ENCODE measurements at regions of chr6 and their contacts with region 1.

Region 1: GRCh38 chr6:129672881-129673643 is 36.9 kb downstream of the ARHGAP18 start:
- DNase-seq: no peak
- ATAC-seq: no peak
- H3K4me3 Mint-ChIP-seq: peak overlapping the region; percentile 32
- H3K27ac Mint-ChIP-seq: peak overlapping the region; percentile 85
- H3K4me1 Mint-ChIP-seq: peaks cover 27% of the 10 kb centered on the region
- H3K27me3 Mint-ChIP-seq: no peaks in the 10 kb centered on the region
- CTCF ChIP-seq: no peak

Region 2: DNA sequence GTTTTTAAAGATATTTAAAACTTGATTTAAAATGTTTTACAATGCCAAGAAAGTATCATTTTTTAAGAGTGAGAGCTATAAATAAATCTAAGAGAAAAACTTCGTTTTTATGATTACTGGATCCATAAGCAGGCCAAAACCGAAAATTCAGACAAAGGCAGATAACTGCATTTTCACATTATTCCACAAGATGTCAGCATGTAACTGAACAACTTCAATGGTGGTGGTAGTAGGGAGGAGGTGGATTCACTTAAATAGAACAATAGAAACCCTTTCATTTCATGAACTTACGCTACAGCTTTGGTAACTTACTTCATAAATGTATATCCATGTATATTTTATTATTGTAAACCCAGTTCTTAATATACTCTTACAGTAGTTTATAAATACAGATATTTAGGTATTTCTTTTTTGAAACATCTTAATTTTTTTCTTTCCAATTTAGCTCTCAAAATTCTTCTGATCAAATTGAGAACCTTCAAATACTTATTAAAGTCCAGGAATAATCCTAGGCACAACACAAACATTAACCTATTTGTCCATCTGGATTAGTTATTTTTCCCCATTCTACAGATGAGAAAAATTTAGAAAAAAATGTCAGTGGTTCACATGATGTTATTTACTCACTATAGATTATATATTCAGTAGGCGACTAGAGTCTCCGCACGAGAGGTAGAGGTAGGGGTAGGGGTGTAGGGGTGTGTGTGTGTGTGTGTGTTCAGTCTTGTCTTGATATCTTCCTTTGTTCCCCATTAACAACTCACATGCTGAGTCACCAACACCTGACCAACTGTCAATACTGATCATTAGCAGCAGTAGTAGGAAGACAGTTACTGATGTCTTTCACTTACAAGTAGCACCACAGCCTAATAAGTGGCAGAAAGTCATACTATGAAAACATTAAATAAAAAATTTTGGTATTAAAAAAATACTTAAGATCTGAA is 74.5 kb before region 1 on chr6:
- CTCF ChIA-PET with region 1: interaction called, 6 read pairs
- POLR2A ChIA-PET with region 1: no interaction called
- intact Hi-C with region 1: loop called (anchors 2 kb)
- DNase-seq: no peak
- ATAC-seq: peak; percentile 93
- H3K4me3 Mint-ChIP-seq: no peak overlapping the region
- H3K27ac Mint-ChIP-seq: no peak overlapping the region
- H3K4me1 Mint-ChIP-seq: peaks cover 5% of the 10 kb centered on the region
- H3K27me3 Mint-ChIP-seq: no peaks in the 10 kb centered on the region
- CTCF ChIP-seq: peak; percentile 53

Region 3: DNA sequence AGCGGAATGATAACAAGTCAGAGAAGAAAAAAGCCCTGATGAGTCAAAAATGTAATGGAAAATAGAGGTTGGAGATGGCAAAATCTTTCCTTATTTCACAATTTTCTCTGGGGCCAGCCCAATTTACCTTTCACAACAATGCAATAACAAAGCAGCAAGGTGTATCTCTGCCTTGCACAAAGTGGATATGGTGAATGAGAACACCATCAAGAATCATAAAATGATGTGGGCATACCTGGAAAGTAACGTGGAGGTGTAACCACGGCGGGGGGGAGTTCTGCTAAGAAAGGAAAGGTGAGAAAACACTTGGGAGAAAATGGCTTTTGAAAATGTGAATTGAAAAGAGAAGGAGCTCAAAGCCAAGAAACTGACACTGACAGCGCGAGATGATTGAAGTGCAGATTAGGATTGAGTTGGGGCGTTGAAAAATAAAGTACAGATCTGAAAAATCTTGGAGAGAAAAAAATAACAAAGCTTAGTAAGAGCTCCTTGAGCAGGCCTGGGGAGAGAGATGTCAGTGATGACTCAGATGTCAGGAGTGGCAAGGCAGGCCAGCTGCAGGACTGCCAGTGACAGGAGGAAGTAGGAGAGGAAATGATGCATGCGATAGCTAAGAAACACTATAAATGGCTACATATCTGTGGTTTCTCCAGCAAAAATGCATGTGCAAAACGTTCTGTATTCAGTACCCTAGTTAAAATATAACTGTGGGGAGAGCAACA is 10.7 kb after region 1 on chr6:
- CTCF ChIA-PET with region 1: interaction called, 5 read pairs
- POLR2A ChIA-PET with region 1: interaction called, 10 read pairs
- intact Hi-C with region 1: loop called (anchors 1 kb)
- DNase-seq: no peak
- ATAC-seq: peak; percentile 99
- H3K4me3 Mint-ChIP-seq: peak overlapping the region; percentile 50
- H3K27ac Mint-ChIP-seq: peak overlapping the region; percentile 76
- H3K4me1 Mint-ChIP-seq: peaks cover 50% of the 10 kb centered on the region
- H3K27me3 Mint-ChIP-seq: no peaks in the 10 kb centered on the region
- CTCF ChIP-seq: no peak

Region 4: GRCh38 chr6:129730477-129731165 is 57.6 kb after region 1 on chr6:
- CTCF ChIA-PET with region 1: interaction called, 12 read pairs
- POLR2A ChIA-PET with region 1: no interaction called
- intact Hi-C with region 1: loop called (anchors 1 kb)
- DNase-seq: no peak
- ATAC-seq: peak; percentile 49
- H3K4me3 Mint-ChIP-seq: no peak overlapping the region
- H3K27ac Mint-ChIP-seq: no peak overlapping the region
- H3K4me1 Mint-ChIP-seq: no peaks in the 10 kb centered on the region
- H3K27me3 Mint-ChIP-seq: no peaks in the 10 kb centered on the region
- CTCF ChIP-seq: peak; percentile 69

Region 5: GRCh38 chr6:129936329-129937165 is 263.5 kb after region 1 on chr6:
- CTCF ChIA-PET with region 1: no interaction called
- POLR2A ChIA-PET with region 1: no interaction called
- intact Hi-C with region 1: loop called (anchors 5 kb)
- DNase-seq: no peak
- ATAC-seq: peak; percentile 50
- H3K4me3 Mint-ChIP-seq: no peak overlapping the region
- H3K27ac Mint-ChIP-seq: no peak overlapping the region
- H3K4me1 Mint-ChIP-seq: peaks cover 4% of the 10 kb centered on the region
- H3K27me3 Mint-ChIP-seq: peaks cover 18% of the 10 kb centered on the region
- CTCF ChIP-seq: peak; percentile 42

Measured in activated B cell treated with CpG ODN at 0.5 μM for 24 hours (primary cell).